Endothelial cell of umbilical vein (primary cell): ENCODE measurements at regions of chr19 and their contacts with region 1.

Region 1: GRCh38 chr19:45376045-45376724 is 5.8 kb upstream of the ERCC2 start:
- DNase-seq: peak; percentile 85
- H3K4me3 ChIP-seq: no peak overlapping the region
- H3K27ac ChIP-seq: peak overlapping the region; percentile 69
- H3K4me1 ChIP-seq: peaks cover 12% of the 10 kb centered on the region
- H3K27me3 ChIP-seq: no peaks in the 10 kb centered on the region
- CTCF ChIP-seq: no peak
- POLR2A ChIP-seq: no peak

Region 2: DNA sequence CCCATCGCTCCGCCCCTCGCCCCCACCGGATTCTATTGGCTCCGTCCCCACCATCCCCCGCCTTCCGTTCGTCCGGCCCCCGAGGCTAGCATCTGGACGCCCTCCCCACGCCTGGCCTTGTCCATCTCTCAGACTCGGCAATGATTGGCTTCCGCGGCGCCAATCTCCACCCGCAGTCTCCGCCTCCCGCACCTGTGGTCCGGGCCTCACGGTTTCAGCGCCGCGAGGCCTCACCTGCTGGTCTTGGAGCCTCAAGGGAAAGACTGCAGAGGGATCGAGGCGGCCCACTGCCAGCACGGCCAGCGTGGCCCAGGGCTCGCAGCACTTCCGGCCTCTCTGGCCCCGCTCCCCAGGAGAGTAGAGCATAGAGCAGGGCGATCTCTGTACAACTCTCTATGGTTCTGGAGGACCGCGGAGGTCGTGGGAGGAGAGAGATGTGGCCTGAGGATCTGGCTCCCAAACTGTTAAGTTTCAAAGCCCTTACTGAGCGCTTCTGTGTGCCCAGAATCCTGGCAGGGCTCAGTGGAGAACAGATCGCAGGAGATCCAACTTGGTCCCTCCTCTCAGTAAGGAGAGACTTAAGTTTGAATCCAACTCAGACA is 47.5 kb after region 1 on chr19 and contains the start of gene ERCC1:
- CTCF ChIA-PET with region 1: no interaction called
- POLR2A ChIA-PET with region 1: no interaction called
- dilution Hi-C with region 1: no loop called
- intact Hi-C with region 1: loop called (anchors 2 kb)
- DNase-seq: peak; percentile 94
- H3K4me3 ChIP-seq: peak within 1 kb of the TSS; percentile 59 to 74 (median 73)
- H3K27ac ChIP-seq: peak within 1 kb of the TSS; percentile 100
- H3K4me1 ChIP-seq: peaks cover 30% of the 10 kb centered on the region
- H3K27me3 ChIP-seq: no peaks in the 10 kb centered on the region
- CTCF ChIP-seq: no peak
- POLR2A ChIP-seq: peak; percentile 61
- total RNA-seq, gene ERCC1: 81.8 and 82.6 TPM in 2 replicates